ENCODE measurements at regions of chr11 and their contacts with region 1.

Region 1: GRCh38 chr11:102341844-102342318 is 5.1 kb upstream of the BIRC2 start:
- DNase-seq: peak; percentile 53
- H3K4me3 ChIP-seq: no peak overlapping the region
- CTCF ChIP-seq: peak; percentile 77

Region 2: DNA sequence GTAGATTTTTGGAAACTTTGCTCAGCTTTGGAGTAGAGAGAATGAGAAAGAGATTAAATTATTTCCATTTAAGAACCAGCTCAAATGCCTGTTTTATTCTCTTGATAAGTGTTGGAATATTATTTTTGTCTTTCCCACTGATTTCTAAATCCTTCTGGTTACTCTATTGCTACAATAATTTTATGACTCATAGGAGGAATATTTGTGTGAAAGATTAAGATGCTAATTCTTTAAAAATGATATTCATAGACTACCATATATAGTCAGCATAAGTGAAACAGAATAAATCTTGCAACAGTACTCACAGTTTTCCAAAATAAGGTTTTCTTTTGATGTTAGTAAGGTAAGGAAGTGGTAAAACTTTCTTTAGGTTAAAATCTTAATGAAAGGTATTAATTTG is 170.8 kb before region 1 on chr11:
- CTCF ChIA-PET with region 1: no interaction called
- POLR2A ChIA-PET with region 1: no interaction called
- DNase-seq: peak; percentile 63
- H3K4me3 ChIP-seq: no peak overlapping the region
- CTCF ChIP-seq: no peak

Region 3: DNA sequence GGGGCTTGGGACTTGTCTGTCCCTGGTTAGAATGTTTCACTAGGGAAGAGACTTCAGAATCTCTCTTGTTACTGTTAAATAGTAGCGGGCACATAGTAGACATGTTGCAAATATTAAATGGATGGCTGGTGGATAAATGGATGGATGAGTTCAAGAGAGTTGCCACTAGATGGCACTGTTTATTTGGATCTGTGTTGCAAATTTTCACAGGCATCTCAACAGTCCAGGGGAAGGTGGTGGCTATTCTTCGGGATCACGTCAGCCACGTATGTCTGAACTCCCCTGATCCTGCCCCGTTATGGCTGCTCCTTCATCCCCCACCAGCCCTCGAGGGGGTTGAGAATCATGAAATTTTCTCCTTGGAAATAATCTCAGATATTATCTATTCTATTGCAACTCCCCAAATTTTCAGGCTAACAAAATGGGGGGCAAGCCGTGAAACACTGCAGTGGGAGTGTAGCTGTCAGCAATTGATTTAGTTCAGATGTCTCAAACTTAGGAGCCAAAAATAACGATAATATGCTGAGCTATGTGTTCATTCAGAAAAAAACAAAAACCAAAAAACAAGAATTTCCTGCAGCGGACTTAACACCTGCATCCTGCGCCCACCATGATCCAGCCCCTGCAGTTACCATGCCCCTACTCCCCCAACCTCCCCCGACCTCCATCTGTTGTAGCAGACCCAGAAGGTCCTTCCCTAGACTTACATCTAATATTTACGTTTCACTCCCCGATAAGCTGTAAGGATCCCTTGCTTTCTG is 53.7 kb before region 1 on chr11:
- CTCF ChIA-PET with region 1: interaction called, 57 read pairs
- POLR2A ChIA-PET with region 1: no interaction called
- DNase-seq: no peak
- H3K4me3 ChIP-seq: no peak overlapping the region
- CTCF ChIP-seq: peak; percentile 62

Region 4: DNA sequence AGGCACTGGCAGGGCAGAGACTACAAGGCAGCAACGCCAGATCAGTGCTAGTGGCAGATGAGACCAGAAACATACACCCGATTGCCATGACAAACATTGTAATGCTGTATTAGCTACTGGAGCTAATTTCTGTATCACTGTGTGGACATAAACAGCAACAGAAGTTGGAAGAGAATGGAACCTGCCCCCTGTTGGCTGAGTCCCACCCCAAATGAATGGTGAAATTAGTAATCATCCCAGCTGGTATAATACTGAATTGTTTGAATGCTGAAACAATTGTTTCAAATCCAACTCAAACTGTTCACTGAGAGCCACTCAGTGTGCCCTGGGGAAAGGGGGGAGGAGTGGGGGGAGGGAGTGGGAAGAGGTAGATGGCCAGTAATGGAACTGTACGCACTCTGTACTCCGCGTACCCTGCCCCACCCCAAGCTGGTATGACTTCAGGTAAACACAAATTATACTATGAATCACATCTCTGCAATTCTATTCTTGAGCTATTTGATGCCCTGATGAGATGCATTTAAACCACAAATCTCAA is 35.8 kb before region 1 on chr11:
- CTCF ChIA-PET with region 1: interaction called, 24 read pairs
- POLR2A ChIA-PET with region 1: no interaction called
- DNase-seq: no peak
- H3K4me3 ChIP-seq: no peak overlapping the region
- CTCF ChIP-seq: no peak

Region 5: GRCh38 chr11:102323542-102324251 is 18.2 kb before region 1 on chr11:
- CTCF ChIA-PET with region 1: interaction called, 15 read pairs
- POLR2A ChIA-PET with region 1: no interaction called
- DNase-seq: no peak
- H3K4me3 ChIP-seq: no peak overlapping the region
- CTCF ChIP-seq: no peak

Region 6: GRCh38 chr11:102614485-102614884 is 272.6 kb after region 1 on chr11:
- CTCF ChIA-PET with region 1: interaction called, 43 read pairs
- POLR2A ChIA-PET with region 1: no interaction called
- DNase-seq: no peak
- H3K4me3 ChIP-seq: no peak overlapping the region
- CTCF ChIP-seq: no peak